ENCODE measurements at regions of chr5 and their contacts with region 1.

Region 1: DNA sequence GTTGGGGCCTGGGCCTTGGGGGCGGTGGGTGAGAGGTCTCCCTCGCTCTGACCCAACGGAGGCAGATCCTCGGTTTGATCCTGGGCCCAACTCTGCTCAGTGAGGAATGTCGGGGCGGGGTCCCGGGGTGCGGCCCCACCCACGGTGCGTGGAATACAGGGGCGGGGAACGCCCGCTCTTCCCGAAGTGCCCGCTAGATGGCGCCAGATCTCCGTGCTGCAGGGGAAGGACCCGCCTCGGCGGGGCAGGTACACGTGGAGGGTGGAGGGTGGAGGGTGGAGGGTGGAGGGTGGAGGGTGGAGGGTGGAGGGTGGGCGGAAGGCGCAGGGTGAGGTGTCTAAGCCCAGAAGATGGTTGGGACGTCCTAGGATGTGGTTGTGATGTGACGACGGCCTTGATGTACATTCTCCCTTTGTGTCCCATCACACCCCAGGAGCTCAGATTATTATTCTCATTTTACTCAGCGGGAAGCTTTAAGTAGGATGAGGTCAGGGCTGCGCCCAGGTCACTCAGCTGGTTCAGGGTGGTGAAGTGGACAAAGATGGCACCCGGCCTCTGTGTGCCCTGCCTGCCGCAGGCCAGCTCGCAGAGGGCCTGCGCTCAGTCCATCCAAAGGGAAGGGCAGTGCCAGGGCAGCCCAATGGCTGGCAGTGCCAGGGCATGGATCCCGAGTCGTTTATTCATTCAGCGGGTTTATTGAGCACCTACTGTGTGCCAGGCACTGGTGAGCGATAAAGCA is 9.4 kb upstream of the RPS14 start:
- DNase-seq: peak; percentile 82 to 86 (median 82)
- H3K4me3 ChIP-seq: no peak overlapping the region
- H3K4me3 Mint-ChIP-seq: peak overlapping the region in 5 of 8 donors; percentile 29 to 72 (median 49)
- H3K27ac ChIP-seq: no peak overlapping the region
- H3K27ac Mint-ChIP-seq: peak overlapping the region; percentile 52 to 88 (median 70)
- H3K4me1 ChIP-seq: peaks cover 19% of the 10 kb centered on the region
- H3K4me1 Mint-ChIP-seq: peaks cover 12 to 29% (median 21%) of the 10 kb centered on the region in 4 donors
- H3K27me3 ChIP-seq: no peaks in the 10 kb centered on the region
- H3K27me3 Mint-ChIP-seq: no peaks in the 10 kb centered on the region

Region 2: GRCh38 chr5:150523472-150524350 is 64.7 kb after region 1 on chr5:
- CTCF ChIA-PET with region 1: interaction called, 8 read pairs
- POLR2A ChIA-PET with region 1: no interaction called
- intact Hi-C with region 1: loop called (anchors 1 kb)
- DNase-seq: peak in 4 of 5 donors; percentile 13 to 18 (median 16)
- H3K4me3 ChIP-seq: no peak overlapping the region
- H3K4me3 Mint-ChIP-seq: no peak overlapping the region
- H3K27ac ChIP-seq: no peak overlapping the region
- H3K27ac Mint-ChIP-seq: no peak overlapping the region
- H3K4me1 ChIP-seq: no peaks in the 10 kb centered on the region
- H3K4me1 Mint-ChIP-seq: no peaks in the 10 kb centered on the region
- H3K27me3 ChIP-seq: no peaks in the 10 kb centered on the region
- H3K27me3 Mint-ChIP-seq: peaks cover 0 to 2% of the 10 kb centered on the region in 2 donors

Region 3: DNA sequence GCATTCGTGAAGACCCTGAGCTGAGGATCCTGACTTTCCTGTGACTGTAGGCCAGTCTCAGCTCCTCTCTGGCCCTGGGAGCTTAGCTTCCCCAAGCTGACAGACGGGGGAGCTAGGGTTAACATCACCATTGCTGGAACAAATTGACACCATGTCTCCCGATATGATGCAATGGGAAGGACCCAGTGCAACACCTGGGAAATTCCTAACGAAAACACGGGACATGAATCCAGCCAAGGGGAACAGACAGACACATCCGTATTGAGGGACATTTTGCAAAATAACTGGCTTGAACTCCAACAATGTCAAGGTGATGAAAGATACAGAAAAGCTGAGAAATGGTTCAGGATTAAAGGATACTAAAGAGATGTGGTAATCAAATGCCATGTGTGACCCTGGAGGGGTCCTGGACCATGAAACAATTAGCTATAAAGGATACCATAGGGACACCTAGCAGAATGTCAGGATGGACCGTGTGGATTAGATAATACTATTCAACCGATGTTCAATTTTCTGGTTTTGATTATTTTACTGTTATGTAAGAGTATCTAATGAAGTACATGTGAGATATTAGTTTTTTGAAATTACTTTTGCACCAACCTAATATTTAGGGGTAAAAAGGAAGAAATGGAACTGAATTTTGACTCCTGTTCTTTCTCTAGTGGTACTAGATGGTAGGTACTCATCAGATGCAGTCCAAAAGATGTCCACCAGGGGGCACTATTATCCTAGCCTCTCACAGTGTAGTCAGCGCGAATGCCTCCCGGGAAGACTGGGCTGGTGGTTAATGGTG is 101.6 kb after region 1 on chr5:
- CTCF ChIA-PET with region 1: interaction called, 21 read pairs
- POLR2A ChIA-PET with region 1: no interaction called
- intact Hi-C with region 1: loop called (anchors 2 kb)
- DNase-seq: peak; percentile 73 to 82 (median 79)
- H3K4me3 ChIP-seq: no peak overlapping the region
- H3K4me3 Mint-ChIP-seq: no peak overlapping the region
- H3K27ac ChIP-seq: no peak overlapping the region
- H3K27ac Mint-ChIP-seq: no peak overlapping the region
- H3K4me1 ChIP-seq: no peaks in the 10 kb centered on the region
- H3K4me1 Mint-ChIP-seq: peaks cover 0 to 1% (median under 1%) of the 10 kb centered on the region in 4 donors
- H3K27me3 ChIP-seq: no peaks in the 10 kb centered on the region
- H3K27me3 Mint-ChIP-seq: peaks cover 0 to 3% of the 10 kb centered on the region in 2 donors

Region 4: DNA sequence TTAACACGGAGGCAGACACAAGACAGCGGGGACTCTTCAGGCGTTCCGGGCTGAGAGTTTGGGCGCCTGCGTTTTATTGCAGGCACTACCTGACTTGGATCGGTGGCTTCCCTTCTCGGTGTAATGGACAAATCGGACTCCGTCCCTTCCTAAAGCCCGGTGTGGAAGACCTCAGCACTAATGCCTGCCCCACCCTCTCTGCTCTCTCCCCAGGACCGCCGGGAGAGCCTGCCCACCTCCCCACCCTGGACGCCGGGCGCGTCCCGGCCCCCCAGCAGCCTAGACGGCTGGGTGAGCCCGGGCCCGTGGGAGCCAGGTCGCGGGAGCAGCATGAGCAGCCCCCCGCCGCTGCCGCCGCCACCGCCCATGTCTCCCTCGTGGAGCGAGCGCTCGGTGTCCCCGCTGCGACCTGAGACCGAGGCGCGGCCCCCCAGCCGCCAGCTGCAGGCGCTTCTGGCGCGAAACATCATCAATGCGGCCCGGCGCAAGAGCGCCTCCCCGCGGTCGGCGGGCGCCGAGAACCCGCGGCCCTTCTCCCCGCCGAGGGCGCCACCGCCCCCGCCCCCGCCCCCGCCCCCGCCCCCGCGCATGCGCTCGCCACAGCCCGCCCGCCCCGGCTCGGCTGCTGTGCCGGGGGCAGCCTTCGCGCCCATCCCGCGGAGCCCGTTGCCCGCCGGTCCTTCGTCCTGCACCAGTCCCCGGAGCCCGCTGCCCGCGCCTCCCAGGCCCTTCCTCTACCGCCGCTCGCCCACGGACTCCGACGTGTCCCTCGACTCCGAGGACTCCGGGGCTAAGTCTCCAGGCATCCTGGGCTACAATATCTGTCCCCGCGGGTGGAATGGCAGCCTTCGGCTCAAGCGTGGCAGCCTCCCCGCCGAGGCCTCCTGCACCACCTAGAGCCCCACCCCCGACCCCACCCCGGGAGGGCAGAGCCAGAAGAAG is 197.5 kb after region 1 on chr5:
- CTCF ChIA-PET with region 1: interaction called, 8 read pairs
- POLR2A ChIA-PET with region 1: no interaction called
- intact Hi-C with region 1: loop called (anchors 1 kb)
- DNase-seq: peak; percentile 76 to 85 (median 84)
- H3K4me3 ChIP-seq: peak overlapping the region; percentile 17 to 56
- H3K4me3 Mint-ChIP-seq: peak overlapping the region; percentile 81 to 92 (median 83)
- H3K27ac ChIP-seq: peak overlapping the region; percentile 28
- H3K27ac Mint-ChIP-seq: peak overlapping the region in 6 of 7 donors; percentile 11 to 88 (median 70)
- H3K4me1 ChIP-seq: peaks cover 12% of the 10 kb centered on the region
- H3K4me1 Mint-ChIP-seq: peaks cover 3 to 12% (median 9%) of the 10 kb centered on the region in 4 donors
- H3K27me3 ChIP-seq: no peaks in the 10 kb centered on the region
- H3K27me3 Mint-ChIP-seq: no peaks in the 10 kb centered on the region

Region 5: DNA sequence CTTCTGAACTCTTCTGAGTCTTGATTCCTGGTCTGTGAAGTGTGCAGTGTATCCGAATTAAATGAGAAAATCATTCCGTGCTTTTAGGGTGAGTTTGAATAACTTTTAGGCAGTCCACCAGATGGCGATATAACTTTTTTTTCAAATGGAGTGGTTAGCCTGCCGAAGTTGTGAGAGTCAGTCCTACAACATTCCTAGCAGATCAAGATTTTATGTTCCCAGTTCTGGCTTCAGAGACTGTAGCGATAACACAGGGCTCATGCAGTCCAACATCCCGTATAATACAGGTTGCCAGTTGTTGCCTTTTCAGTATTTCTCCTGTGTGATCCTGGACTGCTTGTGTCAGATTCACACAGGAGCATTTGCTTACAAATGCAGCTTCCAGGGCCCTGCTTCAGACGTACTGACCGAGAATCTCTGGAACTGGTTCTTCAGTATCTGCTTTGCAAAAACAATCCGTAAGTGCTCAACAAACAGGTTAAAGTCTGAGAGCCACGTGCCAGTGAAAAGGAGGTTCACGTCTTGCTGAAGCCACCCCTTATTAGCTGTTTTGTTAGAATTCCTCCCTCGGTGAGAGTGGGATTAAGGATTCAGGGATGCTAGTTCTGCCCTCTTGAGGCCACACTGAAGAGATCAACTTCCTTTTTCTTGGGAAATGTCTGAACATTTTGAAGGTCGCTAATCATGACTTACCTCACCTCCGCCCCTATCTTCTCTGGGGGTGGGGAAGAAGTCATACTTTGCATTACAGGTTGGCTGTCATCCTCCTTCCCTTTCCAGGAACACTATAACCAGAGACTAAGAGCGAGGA is 342.3 kb after region 1 on chr5:
- CTCF ChIA-PET with region 1: no interaction called
- POLR2A ChIA-PET with region 1: no interaction called
- intact Hi-C with region 1: loop called (anchors 5 kb)
- DNase-seq: peak in 4 of 5 donors; percentile 42 to 50 (median 44)
- H3K4me3 ChIP-seq: no peak overlapping the region
- H3K4me3 Mint-ChIP-seq: no peak overlapping the region
- H3K27ac ChIP-seq: no peak overlapping the region
- H3K27ac Mint-ChIP-seq: peak overlapping the region in 2 of 7 donors; percentile 37 to 55
- H3K4me1 ChIP-seq: peaks cover 8% of the 10 kb centered on the region
- H3K4me1 Mint-ChIP-seq: peaks cover 3 to 5% (median 5%) of the 10 kb centered on the region in 4 donors
- H3K27me3 ChIP-seq: no peaks in the 10 kb centered on the region
- H3K27me3 Mint-ChIP-seq: peaks cover 3 to 6% of the 10 kb centered on the region in 2 donors